ENCODE measurements at regions of chr5 and their contacts with region 1.

Region 1: GRCh38 chr5:112084149-112084548 is 327.2 kb upstream of the NREP start:
- DNase-seq: no peak
- H3K4me3 ChIP-seq: no peak overlapping the region
- H3K27ac ChIP-seq: no peak overlapping the region
- H3K4me1 ChIP-seq: no peaks in the 10 kb centered on the region
- CTCF ChIP-seq: no peak

Region 2: DNA sequence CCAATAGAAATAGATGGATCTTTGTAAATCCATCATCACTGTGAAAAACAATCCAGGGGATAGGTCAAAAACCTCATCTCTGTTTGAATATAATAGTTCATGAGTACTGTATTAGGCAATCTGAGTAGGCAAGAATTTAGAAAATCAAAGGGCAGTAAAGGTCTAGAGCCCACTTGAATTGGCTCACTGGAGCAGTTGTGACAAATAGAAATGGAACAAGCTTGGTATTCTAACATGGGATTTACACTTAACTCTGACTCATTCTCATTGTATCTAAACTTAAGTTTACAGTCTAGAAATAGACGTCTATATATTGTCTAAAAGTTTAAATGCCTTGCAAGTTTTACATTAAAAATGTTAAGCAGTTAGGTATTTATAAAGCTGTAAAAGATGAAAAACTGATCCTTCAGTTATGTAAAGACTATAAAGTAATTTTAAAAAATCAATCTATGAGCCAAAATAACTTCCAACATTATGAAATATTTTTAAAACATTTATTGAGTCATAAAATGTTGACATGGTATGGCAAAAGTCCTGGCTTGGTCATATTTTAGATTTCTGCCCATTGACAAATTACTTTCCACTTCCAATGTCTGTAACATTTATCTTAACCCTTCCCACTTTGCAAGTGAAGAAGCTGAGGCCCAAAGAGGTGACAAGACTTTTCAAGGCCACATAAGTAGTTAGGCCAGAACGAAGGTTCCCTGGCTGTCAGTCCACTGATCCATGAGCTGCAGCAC is 123.5 kb before region 1 on chr5:
- CTCF ChIA-PET with region 1: no interaction called
- POLR2A ChIA-PET with region 1: no interaction called
- intact Hi-C with region 1: no loop called
- DNase-seq: no peak
- H3K4me3 ChIP-seq: no peak overlapping the region
- H3K27ac ChIP-seq: no peak overlapping the region
- H3K4me1 ChIP-seq: no peaks in the 10 kb centered on the region
- CTCF ChIP-seq: no peak

Region 3: GRCh38 chr5:112025757-112026156 is 58.4 kb before region 1 on chr5:
- CTCF ChIA-PET with region 1: no interaction called
- POLR2A ChIA-PET with region 1: no interaction called
- intact Hi-C with region 1: loop called (anchors 10 kb)
- DNase-seq: no peak
- H3K4me3 ChIP-seq: no peak overlapping the region
- H3K27ac ChIP-seq: no peak overlapping the region
- H3K4me1 ChIP-seq: no peaks in the 10 kb centered on the region
- CTCF ChIP-seq: no peak

Measured in OCI-LY7 (cell line).